ENCODE measurements at regions of chr1 and their contacts with region 1.

Region 1: DNA sequence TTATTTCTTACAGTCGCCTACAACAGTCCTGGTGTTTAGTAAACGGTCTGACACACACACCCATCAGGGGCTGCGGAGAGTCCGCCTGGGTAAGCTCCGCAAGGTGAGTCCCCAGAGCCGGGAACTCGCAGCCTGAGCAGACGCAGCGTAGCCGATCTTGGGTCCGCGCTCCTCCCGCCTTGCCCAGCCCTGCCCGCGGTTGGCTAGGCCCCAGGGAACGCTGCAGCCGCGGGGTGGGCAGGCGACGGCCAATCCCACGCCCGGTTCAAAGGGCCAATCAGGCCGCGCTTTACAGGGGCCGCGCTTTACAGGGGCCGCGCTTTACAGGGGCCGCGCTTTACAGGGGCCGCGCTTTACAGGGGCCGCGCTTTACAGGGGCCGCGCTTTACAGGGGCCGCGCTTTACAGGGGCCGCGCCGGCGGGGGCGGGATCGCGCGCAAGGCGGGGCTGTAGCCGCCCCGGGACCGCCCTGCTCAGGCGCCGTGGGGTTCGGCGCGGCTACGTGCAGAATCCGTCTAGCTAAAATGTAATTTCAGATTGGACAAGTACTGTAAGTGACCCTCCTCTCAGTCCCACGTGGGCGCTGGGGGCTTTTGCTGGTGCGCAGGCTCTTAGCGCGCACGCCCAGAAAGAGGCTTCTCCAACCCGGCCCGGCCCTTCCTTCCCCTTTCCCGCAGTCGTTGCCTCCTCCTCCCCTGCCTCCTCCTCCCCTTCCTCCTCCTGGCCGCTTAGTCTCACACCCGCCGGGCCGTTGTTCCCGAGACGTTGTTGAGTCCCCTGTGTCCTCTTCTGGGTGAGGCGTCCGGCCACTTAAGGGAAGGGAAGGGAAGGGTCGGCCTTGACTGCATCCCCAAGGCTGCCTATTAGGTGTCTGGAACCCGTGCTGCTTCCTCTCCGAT is at the start of gene FGGY:
- DNase-seq: peak; percentile 99
- total RNA-seq, gene FGGY: 14.6 to 24.7 TPM

Region 2: DNA sequence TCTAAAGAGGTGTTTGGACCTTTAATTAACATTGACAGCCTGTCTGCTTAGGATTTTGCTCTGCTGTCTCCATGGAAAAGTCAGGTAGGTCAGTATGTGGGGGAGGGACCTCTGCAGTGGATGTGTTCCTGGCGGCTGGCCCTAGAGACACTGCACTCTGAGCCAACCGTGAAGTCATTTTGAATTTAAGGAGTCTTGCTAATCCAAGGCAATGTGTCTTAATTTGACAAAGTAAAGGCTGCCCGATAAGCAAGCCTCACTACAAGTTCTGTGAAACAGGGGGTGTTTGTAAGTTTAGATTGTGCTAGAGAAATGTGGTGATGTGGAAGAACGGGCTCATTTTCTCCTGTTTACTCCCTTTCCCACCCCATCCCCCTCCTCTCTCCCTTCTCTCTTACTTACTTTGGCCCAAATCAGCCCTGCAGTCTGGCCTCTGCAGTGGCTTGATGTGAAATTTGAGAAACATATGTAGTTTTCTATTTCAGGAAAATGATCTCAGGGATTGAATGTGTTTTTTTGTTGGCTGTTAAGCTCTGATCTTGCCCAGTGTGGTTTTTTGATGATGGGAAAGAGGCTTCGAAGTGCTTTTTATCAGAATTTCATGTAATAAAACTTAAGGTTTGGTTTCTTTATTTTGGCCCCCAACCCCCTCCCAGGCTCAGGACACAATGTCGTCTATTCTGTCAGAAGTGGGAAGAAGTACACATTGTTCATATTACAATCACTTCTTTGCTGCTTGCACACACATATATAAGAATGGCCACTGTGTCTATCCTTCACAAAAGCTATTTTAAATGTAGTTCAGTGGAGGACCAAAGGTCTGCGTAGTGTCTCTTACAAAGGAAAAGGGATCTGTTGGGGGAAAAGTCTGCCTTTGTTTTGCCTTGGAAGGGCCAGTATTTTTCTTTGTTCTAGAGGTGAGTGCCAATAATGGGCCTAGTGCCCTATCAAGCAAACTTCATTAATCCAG is 96.9 kb after region 1 on chr1:
- intact Hi-C with region 1: loop called in 1 of 2 experiments (anchors 10 kb)
- DNase-seq: peak; percentile 91

Region 3: GRCh38 chr1:59692591-59692990 is 396.0 kb after region 1 on chr1:
- intact Hi-C with region 1: loop called in 1 of 2 experiments (anchors 5 kb)
- DNase-seq: no peak

Region 4: GRCh38 chr1:59707178-59707791 is 410.7 kb after region 1 on chr1:
- intact Hi-C with region 1: loop called in 1 of 2 experiments (anchors 10 kb)
- DNase-seq: peak; percentile 83

Region 5: DNA sequence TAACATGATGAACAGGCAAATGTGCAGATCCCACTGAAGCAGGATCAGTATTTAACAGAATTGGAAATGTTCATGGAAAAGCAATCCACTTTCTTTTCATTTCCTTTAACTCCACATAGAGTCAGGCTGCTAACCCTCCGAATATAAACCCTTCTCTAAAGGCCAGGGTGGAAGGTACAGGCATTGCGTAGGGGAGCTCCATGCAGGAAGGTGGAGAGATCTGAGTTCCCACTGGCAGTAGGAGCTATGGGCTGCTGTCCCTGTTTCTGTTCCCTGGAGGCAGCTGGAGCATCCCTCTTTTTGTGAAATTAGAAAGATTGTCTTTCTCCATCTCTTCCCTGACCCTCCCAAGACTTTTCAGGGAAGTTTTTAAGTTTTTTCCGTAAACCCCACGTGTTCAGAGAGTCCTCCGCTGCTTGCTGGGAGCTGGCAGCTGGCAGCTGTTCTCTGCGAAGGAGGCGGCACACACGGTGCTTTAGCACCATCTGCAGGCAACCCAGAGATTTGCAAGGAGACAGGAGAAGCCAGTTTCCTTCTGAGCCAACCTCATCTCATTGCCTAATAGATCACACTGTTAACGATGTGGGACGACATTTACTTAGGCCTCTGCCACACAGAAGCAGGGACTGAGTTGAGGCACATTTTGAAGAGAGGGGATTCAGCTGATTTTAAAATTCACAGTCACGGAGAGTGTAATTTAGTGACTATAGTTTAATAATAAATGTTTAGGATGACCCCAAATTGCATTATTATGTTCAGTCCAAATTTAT is 462.7 kb after region 1 on chr1:
- intact Hi-C with region 1: loop called in 1 of 2 experiments (anchors 5 kb)
- DNase-seq: peak; percentile 94